ENCODE measurements at regions of chr6 and their contacts with region 1.

Region 1: GRCh38 chr6:154675602-154676088 is 57.6 kb upstream of the SCAF8 start:
- DNase-seq: peak; percentile 63
- ATAC-seq: peak; percentile 100
- H3K4me3 Mint-ChIP-seq: no peak overlapping the region
- H3K27ac Mint-ChIP-seq: no peak overlapping the region
- H3K4me1 Mint-ChIP-seq: no peaks in the 10 kb centered on the region
- H3K27me3 Mint-ChIP-seq: no peaks in the 10 kb centered on the region
- CTCF ChIP-seq: peak; percentile 91

Region 2: DNA sequence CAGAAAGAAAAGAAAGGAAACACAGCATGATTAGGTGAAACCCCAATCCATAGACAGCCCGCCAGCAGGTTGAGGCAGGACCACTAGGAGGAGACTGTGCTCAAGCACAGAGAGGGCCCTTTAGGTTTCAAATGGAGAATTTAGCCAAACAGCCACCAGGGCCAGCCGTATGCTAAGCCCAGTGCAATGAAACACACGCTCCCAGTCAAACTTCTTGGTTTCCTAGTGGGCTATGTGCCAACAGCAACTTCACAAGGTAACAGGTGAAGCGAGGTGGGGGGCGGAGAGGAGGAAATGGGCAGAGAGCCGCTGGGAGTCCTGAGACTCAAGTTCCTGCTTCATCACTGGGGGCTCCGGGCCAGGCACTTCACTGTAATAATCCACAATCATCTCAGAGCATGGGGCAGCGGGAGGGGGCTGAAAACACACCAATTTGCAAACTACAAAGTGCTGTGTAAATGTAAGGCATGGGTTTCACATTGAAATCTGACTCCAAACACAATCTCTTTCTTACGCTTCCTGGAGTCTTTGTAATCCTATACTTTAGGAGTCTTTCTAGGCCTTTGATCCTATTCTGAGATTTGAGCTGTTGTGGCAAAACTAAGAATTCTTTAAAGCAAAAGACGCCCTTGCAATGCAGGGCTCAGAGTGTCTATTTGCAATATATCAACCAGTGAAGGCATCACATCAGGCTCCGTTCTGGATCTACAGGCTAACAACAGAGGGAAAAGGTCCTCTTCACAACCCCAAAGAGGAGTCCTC is 519.3 kb before region 1 on chr6:
- CTCF ChIA-PET with region 1: no interaction called
- POLR2A ChIA-PET with region 1: no interaction called
- intact Hi-C with region 1: loop called (anchors 1 kb)
- DNase-seq: no peak
- ATAC-seq: peak; percentile 77
- H3K4me3 Mint-ChIP-seq: peak overlapping the region; percentile 41
- H3K27ac Mint-ChIP-seq: peak overlapping the region; percentile 18
- H3K4me1 Mint-ChIP-seq: peaks cover 23% of the 10 kb centered on the region
- H3K27me3 Mint-ChIP-seq: no peaks in the 10 kb centered on the region
- CTCF ChIP-seq: no peak

Region 3: DNA sequence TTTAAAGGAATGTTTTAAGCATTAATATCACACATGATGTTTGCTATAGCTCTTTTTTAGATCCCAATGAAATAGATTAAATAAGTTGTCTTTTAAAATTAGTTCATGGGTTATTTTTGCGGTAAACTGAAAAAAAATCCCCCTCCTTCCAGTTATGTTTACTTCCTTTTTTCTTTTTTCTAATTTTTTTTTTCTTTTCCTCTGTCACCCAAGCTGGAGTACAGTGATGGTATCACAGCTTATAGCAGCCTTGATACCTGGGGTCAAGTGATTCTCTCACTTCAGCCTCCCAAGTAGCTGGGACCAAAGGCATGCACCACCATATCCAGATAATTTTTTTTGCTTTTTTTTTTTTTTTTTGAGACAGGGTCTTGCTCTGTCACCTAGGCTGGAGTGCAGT is 39.8 kb after region 1 on chr6:
- CTCF ChIA-PET with region 1: interaction called, 13 read pairs
- POLR2A ChIA-PET with region 1: interaction called, 5 read pairs
- intact Hi-C with region 1: no loop called
- DNase-seq: no peak
- ATAC-seq: peak; percentile 50
- H3K4me3 Mint-ChIP-seq: no peak overlapping the region
- H3K27ac Mint-ChIP-seq: no peak overlapping the region
- H3K4me1 Mint-ChIP-seq: peaks cover 20% of the 10 kb centered on the region
- H3K27me3 Mint-ChIP-seq: no peaks in the 10 kb centered on the region
- CTCF ChIP-seq: no peak

Region 4: GRCh38 chr6:154805288-154805911 is 129.8 kb after region 1 on chr6:
- CTCF ChIA-PET with region 1: interaction called, 222 read pairs
- POLR2A ChIA-PET with region 1: interaction called, 11 read pairs
- intact Hi-C with region 1: loop called (anchors 1 kb)
- DNase-seq: no peak
- ATAC-seq: peak; percentile 69
- H3K4me3 Mint-ChIP-seq: no peak overlapping the region
- H3K27ac Mint-ChIP-seq: no peak overlapping the region
- H3K4me1 Mint-ChIP-seq: peaks cover 6% of the 10 kb centered on the region
- H3K27me3 Mint-ChIP-seq: no peaks in the 10 kb centered on the region
- CTCF ChIP-seq: no peak

Region 5: DNA sequence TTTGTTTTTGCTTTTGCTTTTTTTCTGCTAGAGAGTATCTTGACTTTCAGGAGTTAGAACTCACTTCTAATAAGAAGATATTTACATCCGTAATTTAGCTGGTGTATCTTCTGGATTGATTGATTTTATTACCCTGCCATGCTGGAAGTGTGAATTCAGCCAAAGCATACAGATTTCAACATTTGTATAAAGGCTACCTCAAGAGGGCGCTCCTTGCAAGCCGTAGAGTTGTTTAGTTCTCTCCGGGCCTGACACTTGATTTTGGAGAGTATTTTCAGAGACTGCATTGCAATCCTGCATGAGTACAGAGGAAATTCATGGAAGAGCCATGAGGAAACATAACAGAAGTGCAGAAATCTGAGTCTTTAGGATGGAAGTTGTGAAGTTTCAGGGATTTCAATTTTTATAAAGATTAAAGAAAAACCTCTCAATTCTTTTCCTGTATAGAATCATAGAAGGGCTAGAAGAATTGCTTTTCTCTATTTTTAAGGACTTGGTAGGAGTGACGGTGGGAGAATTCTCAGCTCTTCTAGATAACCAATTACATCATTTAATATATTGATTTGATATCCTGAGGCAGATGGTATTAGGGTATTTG is 252.8 kb after region 1 on chr6:
- CTCF ChIA-PET with region 1: interaction called, 5 read pairs
- POLR2A ChIA-PET with region 1: no interaction called
- intact Hi-C with region 1: loop called (anchors 1 kb)
- DNase-seq: no peak
- ATAC-seq: no peak
- H3K4me3 Mint-ChIP-seq: no peak overlapping the region
- H3K27ac Mint-ChIP-seq: no peak overlapping the region
- H3K4me1 Mint-ChIP-seq: peaks cover 19% of the 10 kb centered on the region
- H3K27me3 Mint-ChIP-seq: no peaks in the 10 kb centered on the region
- CTCF ChIP-seq: no peak

Region 6: GRCh38 chr6:155314092-155314772 is 638.6 kb after region 1 on chr6 and contains the start of gene TFB1M:
- CTCF ChIA-PET with region 1: no interaction called
- POLR2A ChIA-PET with region 1: no interaction called
- intact Hi-C with region 1: loop called (anchors 5 kb)
- DNase-seq: peak; percentile 90
- ATAC-seq: peak; percentile 94
- H3K4me3 Mint-ChIP-seq: peak within 1 kb of the TSS; percentile 97
- H3K27ac Mint-ChIP-seq: peak within 1 kb of the TSS; percentile 93
- H3K4me1 Mint-ChIP-seq: peaks cover 28% of the 10 kb centered on the region
- H3K27me3 Mint-ChIP-seq: no peaks in the 10 kb centered on the region
- CTCF ChIP-seq: no peak
- total RNA-seq, gene TFB1M: 35.2 and 41.5 TPM in 2 replicates